Posterior vena cava (tissue), 2 donors: ENCODE measurements at regions of chr10 and their contacts with region 1.

Region 1: GRCh38 chr10:64558094-64558856 is 1037.1 kb downstream of the REEP3 start:
- DNase-seq: no peak

Region 2: GRCh38 chr10:64956441-64956840 is 398.2 kb after region 1 on chr10:
- intact Hi-C with region 1: no loop called
- DNase-seq: no peak

Region 3: GRCh38 chr10:65534771-65535170 is 976.5 kb after region 1 on chr10:
- intact Hi-C with region 1: loop called in 1 of 2 experiments (anchors 5 kb)
- DNase-seq: no peak